CD14-positive monocyte (primary cell): ENCODE measurements at regions of chr17 and their contacts with region 1.

Region 1: DNA sequence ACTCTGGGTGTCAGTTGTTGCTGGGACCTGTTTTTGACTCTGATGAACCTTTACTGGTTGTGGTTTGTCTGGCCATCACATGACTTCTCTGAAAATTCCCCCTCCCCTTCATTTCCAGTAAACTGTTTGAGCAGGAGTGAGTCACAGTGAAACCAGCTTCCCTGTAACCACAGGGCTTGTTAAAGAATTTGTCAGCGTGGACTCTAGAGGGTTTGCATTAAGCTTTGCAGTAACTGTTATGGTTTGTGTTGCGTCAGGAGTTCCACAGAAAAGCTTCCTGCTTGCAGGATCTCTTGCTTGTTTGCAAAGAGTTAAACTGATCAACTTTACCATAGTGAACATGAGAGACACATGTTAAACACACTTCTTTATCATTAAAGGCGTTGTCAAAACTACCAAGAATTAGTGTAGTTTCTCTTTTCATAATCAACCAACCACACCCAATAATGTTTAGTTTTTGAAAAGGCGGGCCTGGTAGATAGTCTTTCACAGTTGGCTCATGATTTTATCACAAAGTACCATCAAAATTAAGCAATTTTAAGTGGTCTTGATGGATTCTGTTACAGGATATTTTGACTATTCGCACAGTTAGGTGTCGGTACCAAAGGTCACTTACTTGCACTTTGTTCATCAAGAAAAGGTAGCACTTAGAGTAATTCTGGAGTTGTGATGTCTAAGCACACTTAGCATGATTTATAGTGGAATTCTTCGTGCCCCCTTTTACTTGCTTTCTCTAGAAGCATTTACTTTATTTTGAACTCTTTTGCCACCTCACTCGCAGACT is 79.3 kb downstream of the VMP1 start:
- DNase-seq: peak; percentile 96 to 99 (median 99)
- H3K4me3 ChIP-seq: peak overlapping the region in 2 of 3 experiments; percentile 14 to 64
- H3K4me3 Mint-ChIP-seq: peak overlapping the region; percentile 56 to 83
- H3K27ac ChIP-seq: peak overlapping the region; percentile 94 to 95
- H3K27ac Mint-ChIP-seq: peak overlapping the region; percentile 94 to 98 (median 98)
- H3K4me1 ChIP-seq: peaks cover 83 to 91% of the 10 kb centered on the region in 2 donors
- H3K4me1 Mint-ChIP-seq: peaks cover 65% of the 10 kb centered on the region
- H3K27me3 ChIP-seq: no peaks in the 10 kb centered on the region
- H3K27me3 Mint-ChIP-seq: peaks cover 0 to 2% (median 0%) of the 10 kb centered on the region in 3 donors
- CTCF ChIP-seq: no peak

Region 2: DNA sequence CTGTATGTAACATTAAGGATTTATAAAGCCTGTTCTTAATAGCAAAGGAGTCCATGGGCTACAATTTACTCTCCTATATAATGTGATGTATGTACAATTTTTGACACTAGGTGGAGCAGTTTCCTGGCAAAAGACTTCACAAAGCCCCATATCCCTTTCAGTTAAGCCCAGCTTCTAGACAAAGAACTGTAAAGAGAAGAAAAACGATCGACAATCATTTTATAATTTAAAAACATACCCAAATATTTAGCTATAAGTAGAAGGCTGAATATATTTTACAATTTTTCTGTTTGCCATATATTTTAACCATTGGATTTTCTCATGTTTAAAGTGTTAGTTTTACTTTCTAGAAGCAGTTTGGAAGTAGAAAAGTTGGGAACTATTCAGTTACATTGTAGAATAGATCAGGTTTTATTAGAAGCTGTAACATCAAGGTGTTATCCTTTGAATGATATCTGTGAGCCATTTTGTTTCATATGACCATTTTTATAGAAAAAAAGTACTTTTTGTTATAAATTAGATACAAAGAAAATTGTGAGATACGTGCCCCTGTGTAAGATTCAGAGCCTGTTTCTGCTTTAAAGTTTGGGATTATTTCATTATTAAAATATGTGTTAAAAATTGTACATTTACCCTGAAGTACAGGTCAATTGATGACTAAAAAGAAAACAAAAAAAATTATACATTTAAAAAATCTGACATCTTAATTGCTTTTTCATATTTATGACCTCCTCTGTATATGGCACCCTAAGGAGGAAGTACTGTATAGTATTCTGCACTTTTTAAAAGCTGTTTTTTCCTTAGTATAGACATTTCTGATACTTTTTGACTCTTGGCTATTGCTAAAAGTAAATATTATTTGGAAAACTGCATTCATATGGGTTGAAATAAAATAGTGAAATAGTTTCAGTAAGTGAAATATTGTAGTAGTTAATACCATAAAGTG is 32.9 kb before region 1 on chr17:
- intact Hi-C with region 1: loop called in 1 of 2 experiments (anchors 5 kb)
- DNase-seq: peak; percentile 70 to 80 (median 78)
- H3K4me3 ChIP-seq: peak overlapping the region; percentile 12 to 66 (median 33)
- H3K4me3 Mint-ChIP-seq: peak overlapping the region; percentile 4 to 39
- H3K27ac ChIP-seq: peak overlapping the region in 1 of 2 donors; percentile 71
- H3K27ac Mint-ChIP-seq: peak overlapping the region in 6 of 7 donors; percentile 20 to 92 (median 74)
- H3K4me1 ChIP-seq: peaks cover 26 to 44% of the 10 kb centered on the region in 2 donors
- H3K4me1 Mint-ChIP-seq: peaks cover 33% of the 10 kb centered on the region
- H3K27me3 ChIP-seq: no peaks in the 10 kb centered on the region
- H3K27me3 Mint-ChIP-seq: peaks cover 0 to 2% (median 1%) of the 10 kb centered on the region in 3 donors
- CTCF ChIP-seq: peak; percentile 77

Region 3: DNA sequence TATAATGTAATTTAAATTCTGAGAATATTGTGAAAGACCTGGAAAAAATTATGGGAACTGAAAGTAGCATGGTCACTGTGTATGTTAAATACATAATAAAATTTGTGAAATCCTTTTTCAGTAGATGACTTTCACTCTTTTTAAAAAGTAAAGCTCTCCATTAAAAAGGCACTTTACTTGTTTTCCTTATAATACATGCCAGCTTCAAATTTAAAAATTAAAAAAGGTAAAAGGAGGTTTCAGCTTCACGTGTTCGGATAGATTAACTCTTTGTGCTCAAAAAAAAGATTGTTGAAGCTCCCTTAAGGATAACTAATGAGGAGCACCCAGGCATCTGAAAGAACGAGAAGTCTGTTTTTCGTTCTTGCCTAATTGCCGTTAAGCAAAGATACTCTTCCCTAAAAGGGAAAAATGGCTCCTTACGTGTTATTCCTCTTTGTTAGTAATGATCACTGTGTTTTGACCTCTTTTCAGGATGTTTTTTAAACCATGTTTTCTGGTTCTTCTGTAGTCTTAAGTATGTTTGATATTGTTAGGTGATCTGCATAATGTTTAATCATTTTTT is 18.3 kb after region 1 on chr17:
- intact Hi-C with region 1: loop called in 1 of 2 experiments (anchors 2 kb)
- DNase-seq: peak; percentile 61 to 92 (median 82)
- H3K4me3 ChIP-seq: peak overlapping the region; percentile 2 to 72 (median 51)
- H3K4me3 Mint-ChIP-seq: peak overlapping the region; percentile 70 to 83
- H3K27ac ChIP-seq: peak overlapping the region; percentile 83 to 95
- H3K27ac Mint-ChIP-seq: peak overlapping the region; percentile 95 to 99 (median 98)
- H3K4me1 ChIP-seq: peaks cover 32 to 77% of the 10 kb centered on the region in 2 donors
- H3K4me1 Mint-ChIP-seq: peaks cover 35% of the 10 kb centered on the region
- H3K27me3 ChIP-seq: no peaks in the 10 kb centered on the region
- H3K27me3 Mint-ChIP-seq: peaks cover 0 to 2% (median 0%) of the 10 kb centered on the region in 3 donors
- CTCF ChIP-seq: no peak

Region 4: DNA sequence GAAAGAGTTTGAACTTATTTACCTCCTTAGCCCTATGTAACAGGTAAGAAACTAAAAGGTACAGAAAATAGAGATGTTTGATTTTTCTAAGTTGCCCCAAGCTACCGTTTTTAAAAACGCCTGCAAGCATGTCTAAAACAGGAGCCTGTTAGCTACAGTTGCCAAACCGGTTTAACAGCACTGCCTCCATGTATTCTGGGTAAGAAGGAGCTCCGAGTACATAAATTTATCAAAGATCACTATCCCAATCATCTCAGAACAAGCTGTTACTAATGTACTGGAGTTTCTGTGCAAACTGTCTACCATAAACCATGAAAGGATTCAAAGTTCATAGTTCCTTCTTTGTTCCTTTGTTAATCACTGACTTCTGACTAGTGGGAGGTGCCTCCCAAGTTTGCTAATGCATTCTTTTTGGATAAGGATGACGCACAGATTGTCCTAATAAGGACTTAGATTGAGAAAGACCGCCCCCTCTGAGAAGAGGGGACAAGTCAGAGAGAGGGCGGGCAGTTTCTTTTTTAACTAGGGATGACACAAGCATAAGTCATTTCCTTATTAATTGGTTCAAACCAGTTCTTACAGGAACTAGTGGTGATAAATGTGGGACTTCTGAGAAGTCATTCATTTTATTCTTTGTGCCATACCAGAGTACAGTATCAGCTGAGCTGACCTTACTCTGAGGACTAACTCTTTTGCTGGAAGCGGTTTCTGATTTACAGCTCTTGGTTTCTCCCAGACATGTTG is 50.8 kb after region 1 on chr17:
- intact Hi-C with region 1: loop called (anchors 5 kb)
- DNase-seq: peak; percentile 97 to 100 (median 99)
- H3K4me3 ChIP-seq: peak overlapping the region; percentile 71 to 100 (median 98)
- H3K4me3 Mint-ChIP-seq: peak overlapping the region; percentile 98 to 100
- H3K27ac ChIP-seq: peak overlapping the region; percentile 85 to 95
- H3K27ac Mint-ChIP-seq: peak overlapping the region; percentile 92 to 100 (median 97)
- H3K4me1 ChIP-seq: peaks cover 28 to 31% of the 10 kb centered on the region in 2 donors
- H3K4me1 Mint-ChIP-seq: peaks cover 31% of the 10 kb centered on the region
- H3K27me3 ChIP-seq: no peaks in the 10 kb centered on the region
- H3K27me3 Mint-ChIP-seq: peaks cover 0 to 3% (median 0%) of the 10 kb centered on the region in 3 donors
- CTCF ChIP-seq: no peak

Region 5: DNA sequence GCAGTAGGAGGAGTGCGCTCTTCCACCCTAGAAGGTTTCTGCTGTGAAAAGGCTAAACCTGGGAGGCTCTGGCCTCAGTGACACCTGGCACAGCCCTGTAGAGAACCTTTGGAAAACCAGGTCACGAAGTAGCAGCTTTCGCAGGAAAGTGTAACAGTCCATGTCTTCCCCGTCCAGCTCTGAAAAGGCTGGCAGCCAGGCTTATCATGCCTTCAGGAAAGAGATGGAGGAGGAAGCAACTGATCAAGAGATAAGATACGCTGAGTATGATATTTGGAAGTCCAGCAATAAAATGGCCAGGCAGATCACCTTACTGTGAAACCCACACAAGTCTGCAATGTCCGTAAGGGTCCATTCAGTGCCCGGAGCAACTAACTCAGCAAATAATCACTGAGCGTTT is 83.8 kb after region 1 on chr17:
- intact Hi-C with region 1: no loop called
- DNase-seq: no peak
- H3K4me3 ChIP-seq: no peak overlapping the region
- H3K4me3 Mint-ChIP-seq: no peak overlapping the region
- H3K27ac ChIP-seq: no peak overlapping the region
- H3K27ac Mint-ChIP-seq: peak overlapping the region in 2 of 7 donors; percentile 37 to 46
- H3K4me1 ChIP-seq: no peaks in the 10 kb centered on the region
- H3K4me1 Mint-ChIP-seq: peaks cover 4% of the 10 kb centered on the region
- H3K27me3 ChIP-seq: no peaks in the 10 kb centered on the region
- H3K27me3 Mint-ChIP-seq: no peaks in the 10 kb centered on the region
- CTCF ChIP-seq: no peak